Naive thymus-derived CD4-positive, alpha-beta T cell (primary cell): ENCODE measurements at regions of chr7 and their contacts with region 1.

Region 1: GRCh38 chr7:65373608-65374351 is at the start of gene ZNF92:
- DNase-seq: peak; percentile 84 to 95 (median 94)
- ATAC-seq: peak; percentile 99
- H3K4me3 ChIP-seq: peak within 1 kb of the TSS; percentile 87
- H3K4me3 Mint-ChIP-seq: peak within 1 kb of the TSS; percentile 90 to 98 (median 96)
- H3K27ac ChIP-seq: peak within 1 kb of the TSS; percentile 82
- H3K27ac Mint-ChIP-seq: peak within 1 kb of the TSS; percentile 87 to 96 (median 93)
- H3K4me1 ChIP-seq: peaks cover 8 to 21% of the 10 kb centered on the region in 2 donors
- H3K4me1 Mint-ChIP-seq: peaks cover 18 to 57% (median 49%) of the 10 kb centered on the region in 7 donors
- H3K27me3 ChIP-seq: no peaks in the 10 kb centered on the region
- H3K27me3 Mint-ChIP-seq: no peaks in the 10 kb centered on the region
- total RNA-seq, gene ZNF92: 16.3 to 22.5 (median 19.3) TPM

Region 2: GRCh38 chr7:64307254-64308015 is 1066.3 kb before region 1 on chr7:
- CTCF ChIA-PET with region 1: no interaction called
- POLR2A ChIA-PET with region 1: no interaction called
- intact Hi-C with region 1: loop called (anchors 2 kb)
- DNase-seq: peak; percentile 76 to 95 (median 93)
- ATAC-seq: peak; percentile 99
- H3K4me3 ChIP-seq: peak overlapping the region; percentile 95
- H3K4me3 Mint-ChIP-seq: peak overlapping the region; percentile 90 to 100 (median 96)
- H3K27ac ChIP-seq: peak overlapping the region; percentile 83
- H3K27ac Mint-ChIP-seq: peak overlapping the region; percentile 94 to 99 (median 97)
- H3K4me1 ChIP-seq: peaks cover 0 to 13% of the 10 kb centered on the region in 2 donors
- H3K4me1 Mint-ChIP-seq: peaks cover 13 to 30% (median 19%) of the 10 kb centered on the region in 7 donors
- H3K27me3 ChIP-seq: no peaks in the 10 kb centered on the region
- H3K27me3 Mint-ChIP-seq: no peaks in the 10 kb centered on the region